Right cardiac atrium (tissue), 5 donors: ENCODE measurements at regions of chr5 and their contacts with region 1.

Region 1: DNA sequence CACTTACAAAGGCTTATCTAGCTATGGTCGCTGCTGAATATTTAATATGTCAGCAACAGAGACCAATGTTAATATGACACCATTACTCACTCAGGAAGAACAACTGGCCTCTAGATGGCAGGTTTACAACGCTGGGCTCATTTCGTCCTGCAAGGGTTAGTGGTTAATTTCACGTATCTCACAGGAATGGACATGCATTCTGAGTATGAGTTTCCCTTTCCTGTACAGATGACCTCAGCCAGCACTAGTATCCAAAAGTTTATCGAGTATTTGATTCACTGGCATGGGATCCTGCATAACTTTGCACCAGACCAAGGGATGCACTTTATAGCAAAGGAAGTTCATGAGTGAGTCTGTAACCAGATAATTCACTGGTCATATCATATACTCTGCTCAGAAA is 8.7 kb upstream of the TRPC7 start:
- DNase-seq: no peak
- ATAC-seq: no peak
- H3K4me3 ChIP-seq: no peak overlapping the region
- H3K27ac ChIP-seq: no peak overlapping the region
- H3K4me1 ChIP-seq: no peaks in the 10 kb centered on the region
- H3K27me3 ChIP-seq: no peaks in the 10 kb centered on the region

Region 2: GRCh38 chr5:136686192-136686872 is 312.3 kb after region 1 on chr5:
- intact Hi-C with region 1: loop called in 1 of 4 experiments (anchors 10 kb)
- DNase-seq: no peak
- ATAC-seq: no peak
- H3K4me3 ChIP-seq: no peak overlapping the region
- H3K27ac ChIP-seq: no peak overlapping the region
- H3K4me1 ChIP-seq: no peaks in the 10 kb centered on the region
- H3K27me3 ChIP-seq: no peaks in the 10 kb centered on the region